CD4-positive, alpha-beta T cell (primary cell): ENCODE measurements at regions of chr4 and their contacts with region 1.

Region 1: GRCh38 chr4:75849461-75849860 is 52.8 kb downstream of the PPEF2 start:
- DNase-seq: peak in 2 of 14 experiments; percentile 5 to 13
- ATAC-seq: no peak
- H3K4me3 ChIP-seq: no peak overlapping the region
- H3K4me3 Mint-ChIP-seq: no peak overlapping the region
- H3K27ac ChIP-seq: no peak overlapping the region
- H3K27ac Mint-ChIP-seq: no peak overlapping the region
- H3K4me1 ChIP-seq: peaks cover 4% of the 10 kb centered on the region
- H3K4me1 Mint-ChIP-seq: no peaks in the 10 kb centered on the region
- H3K27me3 ChIP-seq: no peaks in the 10 kb centered on the region
- H3K27me3 Mint-ChIP-seq: peaks cover 16% of the 10 kb centered on the region
- CTCF ChIP-seq: no peak

Region 2: DNA sequence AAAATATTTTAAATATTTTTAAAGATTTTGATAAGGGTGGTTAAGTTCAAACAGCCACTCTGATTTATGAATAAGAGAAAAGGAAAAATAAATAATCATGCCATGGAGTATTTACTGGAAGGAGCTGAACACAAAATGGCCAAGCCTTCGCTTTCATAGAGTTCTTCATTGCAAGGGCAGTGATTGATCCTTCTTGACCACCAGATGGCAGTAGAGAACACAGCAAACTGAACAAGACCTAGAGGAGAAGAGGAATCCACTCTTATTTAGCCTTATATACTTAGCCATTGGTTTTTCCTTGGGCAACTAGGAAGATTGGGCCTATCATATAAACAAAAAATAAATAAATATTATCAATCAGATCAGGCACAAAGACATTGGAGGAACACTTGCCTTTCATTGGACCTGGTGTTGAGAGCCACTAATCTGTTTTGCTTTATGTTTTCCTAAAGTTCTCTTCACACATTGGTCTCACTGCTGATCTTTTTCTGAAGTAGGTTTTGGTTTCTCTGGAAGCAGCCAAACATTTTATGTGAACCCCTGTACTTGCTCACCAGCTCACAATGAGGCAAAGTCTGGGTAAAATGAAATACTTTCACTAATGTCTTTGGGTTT is 974.6 kb before region 1 on chr4:
- CTCF ChIA-PET with region 1: interaction called, 4 read pairs
- POLR2A ChIA-PET with region 1: no interaction called
- intact Hi-C with region 1: loop called in 1 of 2 experiments (anchors 5 kb)
- DNase-seq: peak in 5 of 14 experiments; percentile 3 to 71 (median 57)
- ATAC-seq: peak; percentile 51
- H3K4me3 ChIP-seq: no peak overlapping the region
- H3K4me3 Mint-ChIP-seq: no peak overlapping the region
- H3K27ac ChIP-seq: no peak overlapping the region
- H3K27ac Mint-ChIP-seq: no peak overlapping the region
- H3K4me1 ChIP-seq: no peaks in the 10 kb centered on the region
- H3K4me1 Mint-ChIP-seq: no peaks in the 10 kb centered on the region
- H3K27me3 ChIP-seq: no peaks in the 10 kb centered on the region
- H3K27me3 Mint-ChIP-seq: peaks cover 33% of the 10 kb centered on the region
- CTCF ChIP-seq: peak; percentile 84